Naive thymus-derived CD4-positive, alpha-beta T cell (primary cell): ENCODE measurements at regions of chr10 and their contacts with region 1.

Region 1: GRCh38 chr10:104337974-104338735 is at the start of gene ITPRIP:
- DNase-seq: peak; percentile 60 to 89 (median 88)
- ATAC-seq: peak; percentile 86
- H3K4me3 ChIP-seq: peak within 1 kb of the TSS; percentile 85
- H3K4me3 Mint-ChIP-seq: peak within 1 kb of the TSS; percentile 88 to 100 (median 98)
- H3K27ac ChIP-seq: peak within 1 kb of the TSS; percentile 94
- H3K27ac Mint-ChIP-seq: peak within 1 kb of the TSS; percentile 87 to 100 (median 99)
- H3K4me1 ChIP-seq: peaks cover 22 to 34% of the 10 kb centered on the region in 2 donors
- H3K4me1 Mint-ChIP-seq: peaks cover 34 to 58% (median 49%) of the 10 kb centered on the region in 7 donors
- H3K27me3 ChIP-seq: no peaks in the 10 kb centered on the region
- H3K27me3 Mint-ChIP-seq: peaks cover 0 to 10% (median 0%) of the 10 kb centered on the region in 5 donors
- total RNA-seq, gene ITPRIP: 20.0 to 129 (median 27.8) TPM

Region 2: GRCh38 chr10:104291439-104291951 is 46.7 kb before region 1 on chr10:
- CTCF ChIA-PET with region 1: interaction called, 15 read pairs
- POLR2A ChIA-PET with region 1: interaction called, 8 read pairs
- intact Hi-C with region 1: loop called in 1 of 2 experiments (anchors 1 kb)
- DNase-seq: peak; percentile 77 to 89 (median 86)
- ATAC-seq: peak; percentile 100
- H3K4me3 ChIP-seq: no peak overlapping the region
- H3K4me3 Mint-ChIP-seq: peak overlapping the region in 4 of 10 donors; percentile 0 to 64 (median 26)
- H3K27ac ChIP-seq: no peak overlapping the region
- H3K27ac Mint-ChIP-seq: peak overlapping the region in 5 of 9 donors; percentile 1 to 81 (median 20)
- H3K4me1 ChIP-seq: peaks cover 0 to 9% of the 10 kb centered on the region in 2 donors
- H3K4me1 Mint-ChIP-seq: peaks cover 2 to 11% (median 6%) of the 10 kb centered on the region in 7 donors
- H3K27me3 ChIP-seq: peaks cover 0 to 5% of the 10 kb centered on the region in 2 donors
- H3K27me3 Mint-ChIP-seq: peaks cover 3 to 45% (median 10%) of the 10 kb centered on the region in 5 donors

Region 3: GRCh38 chr10:104300736-104301292 is 37.3 kb before region 1 on chr10:
- CTCF ChIA-PET with region 1: interaction called, 58 read pairs
- POLR2A ChIA-PET with region 1: interaction called, 78 read pairs
- intact Hi-C with region 1: loop called in 1 of 2 experiments (anchors 1 kb)
- DNase-seq: peak in 4 of 9 donors; percentile 42 to 52 (median 46)
- ATAC-seq: no peak
- H3K4me3 ChIP-seq: no peak overlapping the region
- H3K4me3 Mint-ChIP-seq: peak overlapping the region; percentile 31 to 78 (median 70)
- H3K27ac ChIP-seq: no peak overlapping the region
- H3K27ac Mint-ChIP-seq: peak overlapping the region; percentile 60 to 97 (median 89)
- H3K4me1 ChIP-seq: peaks cover 19 to 29% of the 10 kb centered on the region in 2 donors
- H3K4me1 Mint-ChIP-seq: peaks cover 27 to 61% (median 48%) of the 10 kb centered on the region in 7 donors
- H3K27me3 ChIP-seq: no peaks in the 10 kb centered on the region
- H3K27me3 Mint-ChIP-seq: no peaks in the 10 kb centered on the region

Region 4: GRCh38 chr10:104322416-104322782 is 15.8 kb before region 1 on chr10:
- CTCF ChIA-PET with region 1: interaction called, 6 read pairs
- POLR2A ChIA-PET with region 1: interaction called, 60 read pairs
- intact Hi-C with region 1: loop called (anchors 1 to 2 kb)
- DNase-seq: no peak
- ATAC-seq: peak; percentile 44
- H3K4me3 ChIP-seq: peak overlapping the region; percentile 38
- H3K4me3 Mint-ChIP-seq: peak overlapping the region; percentile 72 to 93 (median 82)
- H3K27ac ChIP-seq: peak overlapping the region; percentile 59
- H3K27ac Mint-ChIP-seq: peak overlapping the region; percentile 89 to 96 (median 94)
- H3K4me1 ChIP-seq: peaks cover 54 to 97% of the 10 kb centered on the region in 2 donors
- H3K4me1 Mint-ChIP-seq: peaks cover 83 to 100% (median 99%) of the 10 kb centered on the region in 7 donors
- H3K27me3 ChIP-seq: no peaks in the 10 kb centered on the region
- H3K27me3 Mint-ChIP-seq: no peaks in the 10 kb centered on the region